ENCODE measurements at regions of chrX and their contacts with region 1.

Region 1: DNA sequence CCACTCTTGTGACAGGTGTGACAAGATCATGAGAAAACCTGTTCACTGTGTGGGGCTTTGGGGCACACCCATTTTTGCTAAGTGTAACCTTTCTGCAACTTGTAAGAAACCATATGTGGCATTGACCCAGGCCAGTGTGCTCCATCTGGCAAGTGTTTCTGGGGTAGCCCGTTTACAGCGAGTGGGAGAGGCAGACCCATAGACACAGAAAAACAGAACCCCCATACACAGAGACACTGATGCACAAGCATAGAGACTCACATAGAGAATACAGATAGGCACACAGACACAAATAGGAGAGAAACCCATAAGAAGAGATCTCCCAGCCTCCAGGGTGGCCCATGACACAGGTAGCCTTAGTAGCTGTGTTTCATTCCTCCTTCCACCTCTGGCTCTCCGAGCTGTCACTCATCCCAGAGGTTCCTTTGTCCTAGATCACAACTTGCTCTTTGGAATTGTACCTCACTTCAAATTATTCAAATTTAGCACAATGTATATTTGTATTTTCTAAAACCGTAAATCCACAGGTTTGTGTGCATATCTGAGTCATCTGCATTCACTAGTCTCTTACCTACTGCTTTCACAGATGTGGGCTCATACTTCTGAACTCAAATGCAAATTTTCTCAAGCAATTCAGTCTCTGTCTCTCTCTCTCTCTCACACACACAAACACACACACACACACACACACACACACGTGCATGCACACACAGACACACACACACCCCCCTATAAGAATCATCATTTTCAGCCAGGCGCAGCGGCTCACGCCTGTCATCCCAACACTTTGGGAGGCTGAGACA is 114.4 kb downstream of the SH3KBP1 start:
- DNase-seq: no peak
- ATAC-seq: peak; percentile 29 to 62 (median 47)
- H3K4me3 ChIP-seq: no peak overlapping the region
- H3K4me3 Mint-ChIP-seq: peak overlapping the region; percentile 39 to 63 (median 60)
- H3K27ac ChIP-seq: peak overlapping the region; percentile 64
- H3K27ac Mint-ChIP-seq: peak overlapping the region; percentile 90 to 92
- H3K4me1 ChIP-seq: peaks cover 23 to 64% of the 10 kb centered on the region in 2 experiments
- H3K4me1 Mint-ChIP-seq: peaks cover 65 to 83% (median 71%) of the 10 kb centered on the region in 3 donors
- H3K27me3 ChIP-seq: no peaks in the 10 kb centered on the region
- H3K27me3 Mint-ChIP-seq: peaks cover 0 to 3% of the 10 kb centered on the region in 2 donors

Region 2: GRCh38 chrX:19689170-19689779 is 83.8 kb before region 1 on chrX:
- CTCF ChIA-PET with region 1: no interaction called
- POLR2A ChIA-PET with region 1: no interaction called
- DNase-seq: no peak
- ATAC-seq: no peak
- H3K4me3 ChIP-seq: no peak overlapping the region
- H3K4me3 Mint-ChIP-seq: no peak overlapping the region
- H3K27ac ChIP-seq: peak overlapping the region; percentile 41
- H3K27ac Mint-ChIP-seq: peak overlapping the region; percentile 8 to 27
- H3K4me1 ChIP-seq: peaks cover 5 to 16% of the 10 kb centered on the region in 2 experiments
- H3K4me1 Mint-ChIP-seq: peaks cover 28 to 51% (median 40%) of the 10 kb centered on the region in 3 donors
- H3K27me3 ChIP-seq: no peaks in the 10 kb centered on the region
- H3K27me3 Mint-ChIP-seq: no peaks in the 10 kb centered on the region

Region 3: GRCh38 chrX:19805046-19805690 is 32.1 kb after region 1 on chrX:
- CTCF ChIA-PET with region 1: interaction called in 1 of 2 experiments, 6 read pairs
- POLR2A ChIA-PET with region 1: interaction called in 1 of 2 experiments, 10 read pairs
- DNase-seq: peak in 5 of 35 experiments; percentile 6 to 59 (median 15)
- ATAC-seq: peak; percentile 74 to 82 (median 77)
- H3K4me3 ChIP-seq: peak overlapping the region; percentile 7 to 35
- H3K4me3 Mint-ChIP-seq: peak overlapping the region; percentile 52 to 62 (median 59)
- H3K27ac ChIP-seq: peak overlapping the region; percentile 69
- H3K27ac Mint-ChIP-seq: peak overlapping the region; percentile 87 to 89
- H3K4me1 ChIP-seq: peaks cover 17 to 48% of the 10 kb centered on the region in 2 experiments
- H3K4me1 Mint-ChIP-seq: peaks cover 47 to 65% (median 48%) of the 10 kb centered on the region in 3 donors
- H3K27me3 ChIP-seq: no peaks in the 10 kb centered on the region
- H3K27me3 Mint-ChIP-seq: no peaks in the 10 kb centered on the region

Region 4: GRCh38 chrX:19893711-19894110 is 120.7 kb after region 1 on chrX:
- CTCF ChIA-PET with region 1: no interaction called
- POLR2A ChIA-PET with region 1: interaction called in 1 of 2 experiments, 12 read pairs
- DNase-seq: no peak
- ATAC-seq: no peak
- H3K4me3 ChIP-seq: no peak overlapping the region
- H3K4me3 Mint-ChIP-seq: no peak overlapping the region
- H3K27ac ChIP-seq: no peak overlapping the region
- H3K27ac Mint-ChIP-seq: no peak overlapping the region
- H3K4me1 ChIP-seq: no peaks in the 10 kb centered on the region
- H3K4me1 Mint-ChIP-seq: peaks cover 4 to 9% (median 9%) of the 10 kb centered on the region in 3 donors
- H3K27me3 ChIP-seq: no peaks in the 10 kb centered on the region
- H3K27me3 Mint-ChIP-seq: peaks cover 0 to 5% of the 10 kb centered on the region in 2 donors

Region 5: DNA sequence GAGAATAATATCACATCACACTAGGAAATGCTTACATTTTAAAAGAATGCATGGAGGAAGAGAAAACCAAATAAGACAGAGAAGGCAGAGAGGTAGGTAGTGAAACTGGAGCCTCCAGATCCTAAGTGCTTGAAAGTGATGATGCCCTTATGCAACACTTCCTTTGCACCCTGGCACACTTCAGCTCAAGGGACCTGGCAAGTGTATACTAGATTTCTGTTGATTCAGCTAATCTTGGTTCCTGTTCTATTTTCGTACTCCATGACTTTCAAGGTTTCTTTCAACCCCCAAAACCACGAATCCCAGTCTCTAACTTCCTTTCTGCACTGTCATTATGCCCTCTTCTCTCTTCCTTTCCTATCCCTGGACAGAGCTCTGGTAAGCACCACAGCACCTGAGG is 151.3 kb after region 1 on chrX:
- CTCF ChIA-PET with region 1: no interaction called
- POLR2A ChIA-PET with region 1: no interaction called
- DNase-seq: no peak
- ATAC-seq: no peak
- H3K4me3 ChIP-seq: no peak overlapping the region
- H3K4me3 Mint-ChIP-seq: no peak overlapping the region
- H3K27ac ChIP-seq: no peak overlapping the region
- H3K27ac Mint-ChIP-seq: peak overlapping the region in 1 of 2 donors; percentile 52
- H3K4me1 ChIP-seq: no peaks in the 10 kb centered on the region
- H3K4me1 Mint-ChIP-seq: no peaks in the 10 kb centered on the region
- H3K27me3 ChIP-seq: no peaks in the 10 kb centered on the region
- H3K27me3 Mint-ChIP-seq: peaks cover 0 to 6% of the 10 kb centered on the region in 2 donors

Region 6: DNA sequence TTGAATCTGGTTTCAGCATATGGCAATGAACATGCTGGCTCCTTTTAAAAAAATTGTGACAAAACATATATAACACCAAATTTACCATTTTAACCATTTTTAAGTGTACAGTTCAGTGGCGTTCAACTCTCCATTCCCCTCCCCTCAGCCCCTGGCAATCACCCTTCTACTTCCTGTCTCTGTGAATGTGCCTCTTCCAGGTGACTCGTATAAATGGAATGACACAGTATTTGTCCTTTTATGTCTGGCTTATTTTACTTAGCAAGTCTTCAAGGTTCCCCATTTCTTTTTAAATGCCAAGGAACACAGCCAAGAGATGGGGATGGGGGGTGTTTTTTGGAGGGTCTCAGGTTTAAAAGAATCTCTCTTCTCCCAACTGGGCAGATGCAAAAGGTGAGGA is 253.3 kb after region 1 on chrX:
- CTCF ChIA-PET with region 1: no interaction called
- POLR2A ChIA-PET with region 1: no interaction called
- DNase-seq: no peak
- ATAC-seq: no peak
- H3K4me3 ChIP-seq: no peak overlapping the region
- H3K4me3 Mint-ChIP-seq: no peak overlapping the region
- H3K27ac ChIP-seq: no peak overlapping the region
- H3K27ac Mint-ChIP-seq: no peak overlapping the region
- H3K4me1 ChIP-seq: peaks cover 0 to 14% of the 10 kb centered on the region in 2 experiments
- H3K4me1 Mint-ChIP-seq: peaks cover 8 to 17% (median 13%) of the 10 kb centered on the region in 3 donors
- H3K27me3 ChIP-seq: no peaks in the 10 kb centered on the region
- H3K27me3 Mint-ChIP-seq: peaks cover 0 to 5% of the 10 kb centered on the region in 2 donors

Region 7: GRCh38 chrX:20664774-20665173 is 891.7 kb after region 1 on chrX:
- CTCF ChIA-PET with region 1: no interaction called
- POLR2A ChIA-PET with region 1: no interaction called
- DNase-seq: no peak
- ATAC-seq: no peak
- H3K4me3 ChIP-seq: no peak overlapping the region
- H3K4me3 Mint-ChIP-seq: no peak overlapping the region
- H3K27ac ChIP-seq: no peak overlapping the region
- H3K27ac Mint-ChIP-seq: no peak overlapping the region
- H3K4me1 ChIP-seq: no peaks in the 10 kb centered on the region
- H3K4me1 Mint-ChIP-seq: no peaks in the 10 kb centered on the region
- H3K27me3 ChIP-seq: no peaks in the 10 kb centered on the region
- H3K27me3 Mint-ChIP-seq: no peaks in the 10 kb centered on the region

Measured in T-cell (primary cell).